Upper lobe of right lung (tissue), 1 donor: ENCODE measurements at regions of chr10 and their contacts with region 1.

Region 1: DNA sequence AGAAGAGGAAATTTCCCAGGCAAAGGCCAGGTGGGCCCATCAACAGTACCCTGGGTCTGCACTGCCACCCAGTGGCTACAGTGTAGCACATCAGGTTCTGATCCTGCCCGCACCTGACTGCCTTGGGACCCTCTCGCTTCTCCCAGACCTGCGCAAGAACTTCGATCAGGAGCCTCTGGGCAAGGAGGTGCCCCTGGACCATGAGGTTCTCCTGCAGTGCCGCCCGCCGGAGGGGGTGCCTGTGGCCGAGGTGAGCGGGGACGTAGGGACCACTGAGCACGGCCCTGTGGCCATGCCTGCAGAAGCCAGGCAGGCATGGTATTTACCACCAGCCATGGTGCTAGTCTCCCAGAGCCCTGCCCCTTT is 33.9 kb upstream of the SLC29A3 start:
- DNase-seq: no peak
- ATAC-seq: peak; percentile 69
- H3K4me3 ChIP-seq: no peak overlapping the region
- H3K27ac ChIP-seq: no peak overlapping the region
- H3K4me1 ChIP-seq: no peaks in the 10 kb centered on the region
- H3K27me3 ChIP-seq: no peaks in the 10 kb centered on the region
- CTCF ChIP-seq: peak; percentile 72

Region 2: DNA sequence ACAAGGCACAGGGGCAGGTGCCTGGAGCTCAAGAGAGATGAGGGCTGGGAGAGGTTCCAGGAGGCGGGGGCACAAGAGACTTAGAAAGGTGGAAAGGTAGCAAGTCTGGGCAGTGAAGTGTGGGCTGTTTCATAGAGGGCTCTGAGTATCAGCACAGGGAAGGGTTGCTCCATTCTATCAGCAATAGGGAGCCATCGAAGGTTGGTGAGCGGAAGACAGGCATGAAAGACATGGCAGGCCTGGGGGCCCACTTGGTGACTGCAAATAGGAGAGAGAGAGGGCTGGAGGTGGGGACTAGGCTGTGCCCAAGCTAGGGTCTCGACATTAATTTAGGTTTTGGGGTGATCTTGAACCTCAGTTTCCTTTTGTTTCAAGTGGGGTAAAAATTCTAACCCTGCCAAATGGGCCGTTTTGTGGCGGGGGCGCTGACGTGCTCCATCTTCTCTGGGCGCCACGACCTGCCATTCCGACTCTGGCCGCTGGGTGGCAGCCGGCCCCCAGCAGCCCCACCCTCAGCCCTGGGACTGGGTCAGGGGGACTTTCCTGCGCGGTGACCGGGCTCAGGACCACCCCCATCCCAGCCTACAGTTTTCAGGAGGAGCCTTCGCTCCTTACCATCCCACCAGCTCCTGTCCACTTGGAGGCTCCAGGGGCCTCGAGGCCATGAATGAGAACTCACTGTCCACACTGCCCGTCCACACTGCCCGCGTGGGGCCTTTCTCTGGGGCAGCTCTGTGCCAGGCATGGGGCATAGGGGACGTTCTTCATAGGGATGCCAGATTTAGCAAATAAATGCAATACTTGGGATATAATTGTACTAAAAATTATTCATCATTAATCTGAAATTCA is 359.6 kb before region 1 on chr10:
- intact Hi-C with region 1: loop called (anchors 10 kb)
- DNase-seq: peak; percentile 80
- ATAC-seq: peak; percentile 78
- H3K4me3 ChIP-seq: no peak overlapping the region
- H3K27ac ChIP-seq: no peak overlapping the region
- H3K4me1 ChIP-seq: no peaks in the 10 kb centered on the region
- H3K27me3 ChIP-seq: no peaks in the 10 kb centered on the region
- CTCF ChIP-seq: peak; percentile 94

Region 3: GRCh38 chr10:71068861-71069271 is 216.3 kb before region 1 on chr10:
- intact Hi-C with region 1: no loop called
- DNase-seq: no peak
- ATAC-seq: no peak
- H3K4me3 ChIP-seq: no peak overlapping the region
- H3K27ac ChIP-seq: no peak overlapping the region
- H3K4me1 ChIP-seq: no peaks in the 10 kb centered on the region
- H3K27me3 ChIP-seq: no peaks in the 10 kb centered on the region
- CTCF ChIP-seq: no peak